ENCODE measurements at regions of chr15 and their contacts with region 1.

Region 1: GRCh38 chr15:59917504-59918157 is 86.5 kb upstream of the FOXB1 start:
- DNase-seq: peak; percentile 43 to 77 (median 69)
- ATAC-seq: peak; percentile 74
- H3K4me3 ChIP-seq: no peak overlapping the region
- H3K4me3 Mint-ChIP-seq: no peak overlapping the region
- H3K27ac ChIP-seq: no peak overlapping the region
- H3K27ac Mint-ChIP-seq: no peak overlapping the region
- H3K4me1 ChIP-seq: peaks cover 9% of the 10 kb centered on the region
- H3K4me1 Mint-ChIP-seq: peaks cover 18% of the 10 kb centered on the region
- H3K27me3 ChIP-seq: no peaks in the 10 kb centered on the region
- H3K27me3 Mint-ChIP-seq: peaks cover 10% of the 10 kb centered on the region
- CTCF ChIP-seq: peak; percentile 71

Region 2: GRCh38 chr15:59879506-59880265 is 37.9 kb before region 1 on chr15:
- CTCF ChIA-PET with region 1: no interaction called
- POLR2A ChIA-PET with region 1: no interaction called
- intact Hi-C with region 1: no loop called
- DNase-seq: no peak
- ATAC-seq: no peak
- H3K4me3 ChIP-seq: no peak overlapping the region
- H3K4me3 Mint-ChIP-seq: no peak overlapping the region
- H3K27ac ChIP-seq: no peak overlapping the region
- H3K27ac Mint-ChIP-seq: no peak overlapping the region
- H3K4me1 ChIP-seq: no peaks in the 10 kb centered on the region
- H3K4me1 Mint-ChIP-seq: no peaks in the 10 kb centered on the region
- H3K27me3 ChIP-seq: peaks cover 0 to 2% of the 10 kb centered on the region in 2 experiments
- H3K27me3 Mint-ChIP-seq: peaks cover 9% of the 10 kb centered on the region
- CTCF ChIP-seq: no peak

Region 3: DNA sequence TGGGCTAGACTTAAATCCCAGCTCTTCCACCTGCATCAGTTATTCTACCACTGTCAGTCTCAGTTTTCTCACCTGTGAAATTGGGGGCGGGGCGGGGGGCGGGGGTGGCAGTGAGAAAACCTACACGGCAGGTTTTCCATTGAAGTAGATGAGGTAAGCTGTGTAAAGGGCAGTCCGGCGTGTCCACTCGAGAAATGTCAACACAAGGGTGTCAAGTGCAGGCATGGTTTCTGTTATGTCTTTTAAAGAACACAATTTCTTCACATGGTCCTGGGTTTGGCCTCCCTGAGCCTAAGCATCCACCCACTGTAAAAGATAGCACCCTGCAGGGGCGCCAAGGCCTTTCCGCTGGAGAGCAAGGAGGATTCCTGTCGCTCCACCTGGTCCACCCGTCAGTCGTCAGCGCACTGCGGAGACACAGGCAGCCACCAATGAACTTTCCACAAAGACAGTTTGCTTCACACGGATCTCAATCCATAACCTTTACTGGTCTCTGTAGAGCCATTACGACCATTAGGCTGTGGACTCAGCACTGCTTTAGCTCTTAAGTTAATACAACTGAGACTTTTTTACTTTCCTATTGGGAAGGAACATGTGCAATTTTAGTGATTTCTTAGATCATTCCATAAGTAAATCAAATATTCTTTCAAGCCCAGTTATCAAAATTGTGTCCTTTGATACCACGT is 13.0 kb before region 1 on chr15:
- CTCF ChIA-PET with region 1: interaction called, 10 read pairs
- POLR2A ChIA-PET with region 1: no interaction called
- intact Hi-C with region 1: no loop called
- DNase-seq: no peak
- ATAC-seq: no peak
- H3K4me3 ChIP-seq: no peak overlapping the region
- H3K4me3 Mint-ChIP-seq: no peak overlapping the region
- H3K27ac ChIP-seq: no peak overlapping the region
- H3K27ac Mint-ChIP-seq: no peak overlapping the region
- H3K4me1 ChIP-seq: no peaks in the 10 kb centered on the region
- H3K4me1 Mint-ChIP-seq: no peaks in the 10 kb centered on the region
- H3K27me3 ChIP-seq: no peaks in the 10 kb centered on the region
- H3K27me3 Mint-ChIP-seq: peaks cover 22% of the 10 kb centered on the region
- CTCF ChIP-seq: no peak

Region 4: GRCh38 chr15:60006203-60006862 is 88.7 kb after region 1 on chr15:
- CTCF ChIA-PET with region 1: no interaction called
- POLR2A ChIA-PET with region 1: no interaction called
- intact Hi-C with region 1: loop called in 1 of 2 experiments (anchors 5 kb)
- DNase-seq: peak in 8 of 9 experiments; percentile 43 to 71 (median 58)
- ATAC-seq: peak; percentile 69
- H3K4me3 ChIP-seq: peak overlapping the region; percentile 48 to 53
- H3K4me3 Mint-ChIP-seq: peak overlapping the region; percentile 83
- H3K27ac ChIP-seq: no peak overlapping the region
- H3K27ac Mint-ChIP-seq: peak overlapping the region; percentile 71
- H3K4me1 ChIP-seq: peaks cover 36% of the 10 kb centered on the region
- H3K4me1 Mint-ChIP-seq: peaks cover 33% of the 10 kb centered on the region
- H3K27me3 ChIP-seq: peaks cover 62 to 73% of the 10 kb centered on the region in 2 experiments
- H3K27me3 Mint-ChIP-seq: peaks cover 92% of the 10 kb centered on the region
- CTCF ChIP-seq: no peak

Region 5: DNA sequence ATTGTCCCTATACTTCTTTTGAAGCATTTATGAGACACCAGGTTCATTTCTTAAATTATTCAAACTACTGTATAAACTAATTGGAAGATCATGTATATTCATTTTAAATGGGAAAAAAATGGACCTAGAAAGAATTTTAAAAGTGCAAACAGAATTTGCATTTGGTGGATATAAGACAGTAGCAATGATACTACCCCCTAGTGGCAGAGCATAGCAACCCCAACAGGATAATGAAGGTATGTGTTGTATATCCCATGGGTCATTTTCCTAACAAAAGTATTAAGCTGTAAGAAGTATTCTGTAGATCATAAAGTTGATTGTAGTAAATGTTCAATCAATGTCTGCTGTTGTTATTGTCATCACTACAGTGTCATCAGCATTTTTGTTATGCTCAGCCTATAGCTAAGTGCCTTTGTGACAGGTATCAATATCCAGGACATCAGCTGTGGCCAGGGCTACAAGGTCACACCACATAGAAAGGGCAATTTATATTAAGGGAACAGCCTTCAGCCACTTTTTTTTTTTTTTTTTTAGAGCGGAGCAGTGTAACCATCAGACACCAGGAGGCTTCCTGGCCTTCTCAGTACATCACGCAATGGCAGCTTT is 262.3 kb after region 1 on chr15:
- CTCF ChIA-PET with region 1: interaction called, 24 read pairs
- POLR2A ChIA-PET with region 1: no interaction called
- intact Hi-C with region 1: loop called (anchors 1 kb)
- DNase-seq: peak in 5 of 9 experiments; percentile 3 to 70 (median 34)
- ATAC-seq: peak; percentile 63
- H3K4me3 ChIP-seq: no peak overlapping the region
- H3K4me3 Mint-ChIP-seq: no peak overlapping the region
- H3K27ac ChIP-seq: no peak overlapping the region
- H3K27ac Mint-ChIP-seq: no peak overlapping the region
- H3K4me1 ChIP-seq: no peaks in the 10 kb centered on the region
- H3K4me1 Mint-ChIP-seq: no peaks in the 10 kb centered on the region
- H3K27me3 ChIP-seq: no peaks in the 10 kb centered on the region
- H3K27me3 Mint-ChIP-seq: peaks cover 9% of the 10 kb centered on the region
- CTCF ChIP-seq: peak; percentile 94